Naive thymus-derived CD4-positive, alpha-beta T cell (primary cell): ENCODE measurements at regions of chr2 and their contacts with region 1.

Region 1: GRCh38 chr2:96554293-96555145 is 18.0 kb downstream of the ARID5A start:
- DNase-seq: peak; percentile 46 to 80 (median 73)
- ATAC-seq: peak; percentile 76
- H3K4me3 ChIP-seq: no peak overlapping the region
- H3K4me3 Mint-ChIP-seq: peak overlapping the region in 7 of 10 donors; percentile 3 to 67 (median 32)
- H3K27ac ChIP-seq: no peak overlapping the region
- H3K27ac Mint-ChIP-seq: peak overlapping the region; percentile 33 to 88 (median 71)
- H3K4me1 ChIP-seq: peaks cover 4 to 7% of the 10 kb centered on the region in 2 donors
- H3K4me1 Mint-ChIP-seq: peaks cover 0 to 30% (median 15%) of the 10 kb centered on the region in 7 donors
- H3K27me3 ChIP-seq: no peaks in the 10 kb centered on the region
- H3K27me3 Mint-ChIP-seq: peaks cover 0 to 2% (median 0%) of the 10 kb centered on the region in 5 donors

Region 2: GRCh38 chr2:96470636-96471035 is 83.9 kb before region 1 on chr2:
- CTCF ChIA-PET with region 1: no interaction called
- POLR2A ChIA-PET with region 1: no interaction called
- intact Hi-C with region 1: loop called (anchors 1 to 2 kb)
- DNase-seq: peak; percentile 9 to 69 (median 32)
- ATAC-seq: peak; percentile 82
- H3K4me3 ChIP-seq: no peak overlapping the region
- H3K4me3 Mint-ChIP-seq: peak overlapping the region in 6 of 10 donors; percentile 6 to 70 (median 24)
- H3K27ac ChIP-seq: no peak overlapping the region
- H3K27ac Mint-ChIP-seq: peak overlapping the region in 1 of 9 donors; percentile 60
- H3K4me1 ChIP-seq: peaks cover 0 to 4% of the 10 kb centered on the region in 2 donors
- H3K4me1 Mint-ChIP-seq: peaks cover 3 to 10% (median 5%) of the 10 kb centered on the region in 7 donors
- H3K27me3 ChIP-seq: no peaks in the 10 kb centered on the region
- H3K27me3 Mint-ChIP-seq: peaks cover 5 to 12% (median 6%) of the 10 kb centered on the region in 5 donors

Region 3: GRCh38 chr2:96527286-96528005 is 27.1 kb before region 1 on chr2:
- CTCF ChIA-PET with region 1: interaction called, 26 read pairs
- POLR2A ChIA-PET with region 1: interaction called, 241 read pairs
- intact Hi-C with region 1: loop called (anchors 1 kb)
- DNase-seq: peak in 5 of 9 donors; percentile 45 to 74 (median 46)
- ATAC-seq: peak; percentile 20
- H3K4me3 ChIP-seq: peak overlapping the region; percentile 77
- H3K4me3 Mint-ChIP-seq: peak overlapping the region; percentile 58 to 85 (median 83)
- H3K27ac ChIP-seq: peak overlapping the region; percentile 71
- H3K27ac Mint-ChIP-seq: peak overlapping the region; percentile 67 to 93 (median 87)
- H3K4me1 ChIP-seq: peaks cover 38 to 43% of the 10 kb centered on the region in 2 donors
- H3K4me1 Mint-ChIP-seq: peaks cover 32 to 90% (median 46%) of the 10 kb centered on the region in 7 donors
- H3K27me3 ChIP-seq: no peaks in the 10 kb centered on the region
- H3K27me3 Mint-ChIP-seq: no peaks in the 10 kb centered on the region

Region 4: DNA sequence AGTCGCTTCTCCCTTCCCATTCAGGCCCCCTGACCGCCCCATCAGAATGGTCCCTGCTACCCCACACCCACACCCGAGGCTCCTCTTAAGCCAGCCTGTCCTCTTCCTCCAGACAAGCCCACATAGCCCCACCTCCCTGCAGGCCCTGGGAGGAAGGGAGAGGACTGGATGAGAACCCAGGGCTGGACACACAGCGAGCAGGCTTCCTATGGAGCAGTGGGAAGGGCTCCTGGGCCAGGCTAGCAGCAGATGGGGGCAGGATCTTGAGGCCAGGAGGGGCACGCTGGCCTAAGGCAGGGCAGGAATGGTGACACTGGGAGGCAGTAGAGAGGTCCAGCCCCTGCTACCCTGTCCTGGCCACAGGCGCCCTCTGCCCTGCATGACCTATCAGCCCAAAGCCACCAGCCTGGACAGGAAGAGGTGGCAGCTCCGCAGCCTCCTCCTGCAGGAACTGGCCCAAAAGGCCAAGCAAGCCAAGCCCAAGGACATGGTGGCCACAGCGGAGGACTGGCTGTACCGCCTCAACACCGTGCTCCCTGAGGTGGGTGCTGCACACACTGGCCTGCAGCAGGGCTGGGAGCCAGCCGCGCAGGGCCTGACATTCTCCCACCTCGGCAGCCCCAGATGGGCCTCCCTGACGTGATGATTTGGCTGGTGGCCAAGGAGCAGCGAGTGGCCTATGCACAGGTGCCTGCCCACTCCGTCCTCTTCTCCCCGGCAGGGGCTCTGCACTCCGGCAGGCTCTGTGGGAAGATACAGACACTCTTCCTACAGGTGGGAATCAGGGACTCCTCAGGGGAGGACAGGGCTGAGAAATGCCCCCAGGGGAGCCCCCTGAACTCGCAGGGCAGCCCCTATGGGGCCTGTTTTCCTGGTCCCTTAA is 131.3 kb after region 1 on chr2:
- CTCF ChIA-PET with region 1: no interaction called
- POLR2A ChIA-PET with region 1: no interaction called
- intact Hi-C with region 1: no loop called
- DNase-seq: no peak
- ATAC-seq: no peak
- H3K4me3 ChIP-seq: no peak overlapping the region
- H3K4me3 Mint-ChIP-seq: no peak overlapping the region
- H3K27ac ChIP-seq: no peak overlapping the region
- H3K27ac Mint-ChIP-seq: no peak overlapping the region
- H3K4me1 ChIP-seq: no peaks in the 10 kb centered on the region
- H3K4me1 Mint-ChIP-seq: peaks cover 0 to 2% (median 0%) of the 10 kb centered on the region in 7 donors
- H3K27me3 ChIP-seq: no peaks in the 10 kb centered on the region
- H3K27me3 Mint-ChIP-seq: peaks cover 0 to 5% (median 4%) of the 10 kb centered on the region in 5 donors